Pancreas (tissue), 10 donors: ENCODE measurements at regions of chr14 and their contacts with region 1.

Region 1: DNA sequence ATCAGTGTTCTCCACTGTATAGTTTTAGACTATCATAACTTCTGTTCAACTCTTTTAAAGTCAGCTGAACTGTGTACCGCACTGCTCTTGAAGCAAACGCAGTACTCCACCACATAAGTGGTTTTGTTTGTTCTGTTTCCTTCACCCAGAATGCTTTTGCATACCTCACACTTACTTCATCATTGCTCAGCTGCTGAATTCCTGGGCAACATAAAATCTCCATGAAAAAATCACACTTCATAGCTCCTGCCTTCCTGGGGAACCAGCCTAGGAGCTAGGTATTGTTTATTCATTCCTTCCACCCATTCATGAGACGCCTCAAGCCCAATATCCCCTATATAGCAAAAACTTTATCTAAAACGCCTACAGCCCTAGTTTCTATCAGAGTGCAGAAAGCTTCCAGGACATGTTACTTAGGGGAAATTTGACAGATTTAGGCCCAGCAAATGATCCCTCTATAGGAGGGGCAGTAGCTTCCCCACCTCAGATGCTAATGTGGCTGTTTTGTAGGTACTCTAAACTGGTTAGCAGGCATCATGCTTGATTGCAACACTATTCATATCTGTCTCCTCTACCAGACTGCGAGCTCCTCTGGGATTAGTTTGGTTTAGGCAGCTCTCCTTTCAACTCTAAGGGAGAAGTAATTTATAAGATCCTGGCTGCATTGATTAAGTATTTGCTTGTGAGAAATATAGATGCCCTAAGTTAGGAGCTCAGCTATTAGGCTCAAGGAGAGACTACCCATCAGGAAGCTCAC is 44.5 kb downstream of the LRRC9 start:
- DNase-seq: no peak
- ATAC-seq: peak in 3 of 4 donors; percentile 5 to 28 (median 17)
- H3K4me3 ChIP-seq: peak overlapping the region in 1 of 4 donors; percentile 8
- H3K27ac ChIP-seq: no peak overlapping the region
- H3K4me1 ChIP-seq: no peaks in the 10 kb centered on the region
- H3K27me3 ChIP-seq: no peaks in the 10 kb centered on the region
- CTCF ChIP-seq: no peak

Region 2: DNA sequence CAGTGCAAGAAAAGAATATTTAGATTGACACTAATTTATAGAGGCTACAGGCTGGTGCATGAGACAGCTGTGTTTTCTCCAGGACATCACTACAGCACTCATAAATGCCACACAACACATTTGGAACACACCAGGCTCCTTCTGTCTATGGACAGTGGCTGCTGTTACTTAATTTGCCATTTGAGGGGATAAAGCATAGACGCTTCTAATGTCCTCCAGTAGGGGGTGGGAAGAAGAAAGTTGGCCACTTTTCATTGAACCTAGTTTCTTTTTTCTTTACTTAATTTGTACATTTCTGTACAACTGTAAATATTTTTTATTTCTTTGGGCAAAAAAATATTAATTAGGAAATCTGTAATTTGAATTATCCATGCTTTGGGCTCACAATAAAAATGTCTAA is 81.5 kb before region 1 on chr14:
- intact Hi-C with region 1: no loop called
- DNase-seq: no peak
- ATAC-seq: no peak
- H3K4me3 ChIP-seq: no peak overlapping the region
- H3K27ac ChIP-seq: no peak overlapping the region
- H3K4me1 ChIP-seq: no peaks in the 10 kb centered on the region
- H3K27me3 ChIP-seq: no peaks in the 10 kb centered on the region
- CTCF ChIP-seq: no peak

Region 3: GRCh38 chr14:59897761-59898383 is 66.6 kb before region 1 on chr14:
- intact Hi-C with region 1: no loop called
- DNase-seq: peak in 2 of 6 donors; percentile 3 to 18
- ATAC-seq: peak in 3 of 4 donors; percentile 83 to 89 (median 84)
- H3K4me3 ChIP-seq: no peak overlapping the region
- H3K27ac ChIP-seq: no peak overlapping the region
- H3K4me1 ChIP-seq: no peaks in the 10 kb centered on the region
- H3K27me3 ChIP-seq: no peaks in the 10 kb centered on the region
- CTCF ChIP-seq: peak in 3 of 4 donors; percentile 15 to 25 (median 23)

Region 4: DNA sequence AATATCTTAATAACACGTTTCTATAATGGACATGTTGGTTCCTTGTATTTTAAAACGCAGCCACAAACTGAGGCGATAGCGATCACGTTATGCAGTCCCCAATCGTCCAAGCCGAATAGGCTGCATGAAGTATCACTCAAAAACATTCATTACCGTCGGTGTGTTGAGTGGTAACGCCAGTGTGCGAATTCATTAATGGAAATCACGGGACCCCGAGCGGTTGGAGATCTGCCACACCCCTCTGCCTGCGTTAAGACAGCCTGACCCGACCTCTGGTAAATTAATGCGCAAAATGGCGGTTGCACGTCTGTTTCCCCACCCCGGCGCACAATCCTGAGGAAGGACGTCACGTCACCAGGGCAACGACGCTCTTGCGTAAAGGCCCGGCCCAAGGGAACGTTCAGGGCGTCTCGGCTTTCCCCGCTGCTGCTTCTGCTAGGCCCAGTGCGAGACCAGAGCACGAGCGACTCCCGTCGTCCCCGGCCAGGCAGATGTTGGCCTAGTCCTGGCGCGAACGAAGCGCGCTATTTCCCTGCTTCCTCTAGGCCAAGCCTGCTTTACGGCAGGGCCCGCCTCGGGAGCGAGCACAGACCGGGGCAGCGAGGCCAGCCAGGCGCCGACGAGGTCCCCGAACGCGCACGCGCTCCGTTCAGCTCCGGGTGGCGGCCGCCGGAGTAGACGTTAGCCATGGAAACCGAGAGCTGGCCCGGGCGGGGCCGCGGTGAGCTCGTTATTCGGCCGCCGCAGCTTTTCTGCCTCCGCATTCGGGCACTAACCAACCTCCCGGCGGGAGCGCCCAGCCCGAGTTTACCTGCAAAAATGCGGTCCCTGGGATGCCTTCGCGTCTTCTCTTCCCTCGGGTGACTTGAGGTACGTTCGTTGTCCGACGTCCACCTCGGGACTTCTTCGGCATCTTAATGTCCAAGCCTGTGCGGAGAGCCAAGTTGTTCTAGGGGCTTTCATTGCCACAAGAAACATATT is 127.4 kb after region 1 on chr14 and contains the start of gene PCNX4:
- intact Hi-C with region 1: no loop called
- DNase-seq: peak; percentile 93 to 97 (median 96)
- ATAC-seq: peak; percentile 94 to 98 (median 96)
- H3K4me3 ChIP-seq: peak within 1 kb of the TSS; percentile 55 to 67 (median 64)
- H3K27ac ChIP-seq: peak within 1 kb of the TSS; percentile 93 to 99 (median 98)
- H3K4me1 ChIP-seq: peaks cover 0 to 11% (median 7%) of the 10 kb centered on the region in 3 donors
- H3K27me3 ChIP-seq: no peaks in the 10 kb centered on the region
- CTCF ChIP-seq: no peak
- total RNA-seq, gene PCNX4: 13.7 to 24.0 (median 16.1) TPM

Region 5: GRCh38 chr14:60164712-60165546 is 200.5 kb after region 1 on chr14 and contains the start of gene DHRS7:
- intact Hi-C with region 1: loop called in 1 of 3 experiments (anchors 10 kb)
- DNase-seq: peak; percentile 79 to 92 (median 83)
- ATAC-seq: peak; percentile 97 to 99 (median 97)
- H3K4me3 ChIP-seq: peak within 1 kb of the TSS; percentile 39 to 87 (median 62)
- H3K27ac ChIP-seq: peak within 1 kb of the TSS; percentile 61 to 94 (median 84)
- H3K4me1 ChIP-seq: peaks cover 3 to 7% (median 5%) of the 10 kb centered on the region in 3 donors
- H3K27me3 ChIP-seq: no peaks in the 10 kb centered on the region
- CTCF ChIP-seq: peak in 3 of 4 donors; percentile 22 to 37 (median 27)
- total RNA-seq, gene DHRS7: 29.4 to 65.4 (median 37.9) TPM

Region 6: GRCh38 chr14:60184146-60184904 is 219.9 kb after region 1 on chr14:
- intact Hi-C with region 1: loop called in 1 of 3 experiments (anchors 10 kb)
- DNase-seq: no peak
- ATAC-seq: peak; percentile 55 to 91 (median 83)
- H3K4me3 ChIP-seq: peak overlapping the region in 2 of 4 donors; percentile 23 to 31
- H3K27ac ChIP-seq: peak overlapping the region in 2 of 4 donors; percentile 3 to 34
- H3K4me1 ChIP-seq: no peaks in the 10 kb centered on the region
- H3K27me3 ChIP-seq: no peaks in the 10 kb centered on the region
- CTCF ChIP-seq: peak in 3 of 4 donors; percentile 56 to 61 (median 59)

Region 7: GRCh38 chr14:60195179-60195810 is 230.9 kb after region 1 on chr14:
- intact Hi-C with region 1: loop called in 1 of 3 experiments (anchors 10 kb)
- DNase-seq: no peak
- ATAC-seq: peak in 3 of 4 donors; percentile 24 to 71 (median 28)
- H3K4me3 ChIP-seq: no peak overlapping the region
- H3K27ac ChIP-seq: no peak overlapping the region
- H3K4me1 ChIP-seq: no peaks in the 10 kb centered on the region
- H3K27me3 ChIP-seq: no peaks in the 10 kb centered on the region
- CTCF ChIP-seq: no peak